ENCODE measurements at regions of chr6 and their contacts with region 1.

Region 1: DNA sequence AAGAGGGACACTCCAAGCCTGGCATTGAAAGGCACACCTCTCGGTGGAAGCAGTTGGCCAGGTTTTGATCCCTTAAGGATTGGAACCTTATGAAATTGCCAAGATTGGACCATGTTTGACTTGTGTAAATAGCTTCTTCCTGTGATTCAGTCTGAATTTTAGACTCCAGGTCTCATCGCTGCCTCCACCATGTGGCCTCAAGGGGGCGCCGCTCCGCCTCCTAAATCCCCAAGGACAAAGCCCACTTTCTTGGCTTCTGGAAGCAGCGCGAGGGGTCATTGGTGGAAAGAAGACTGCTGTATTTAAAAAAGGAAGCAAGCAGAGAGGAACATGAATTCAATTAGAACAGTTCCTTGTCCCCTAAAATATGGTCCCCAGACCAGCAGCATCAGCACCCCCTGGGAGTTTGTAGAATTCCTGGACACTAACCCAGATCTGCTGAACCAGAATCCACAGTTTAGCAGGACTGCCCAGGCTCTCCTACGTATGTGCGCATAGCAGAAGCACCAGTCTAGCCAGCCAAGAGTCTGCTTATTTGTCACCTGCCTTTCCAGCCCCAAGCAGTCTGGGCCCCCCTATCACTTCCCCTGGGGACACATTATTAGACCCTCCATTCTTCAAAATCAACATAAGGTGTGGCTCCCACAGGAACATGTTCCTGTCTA is 108.5 kb downstream of the LY86 start:
- DNase-seq: no peak
- H3K4me3 ChIP-seq: no peak overlapping the region
- CTCF ChIP-seq: peak; percentile 72

Region 2: DNA sequence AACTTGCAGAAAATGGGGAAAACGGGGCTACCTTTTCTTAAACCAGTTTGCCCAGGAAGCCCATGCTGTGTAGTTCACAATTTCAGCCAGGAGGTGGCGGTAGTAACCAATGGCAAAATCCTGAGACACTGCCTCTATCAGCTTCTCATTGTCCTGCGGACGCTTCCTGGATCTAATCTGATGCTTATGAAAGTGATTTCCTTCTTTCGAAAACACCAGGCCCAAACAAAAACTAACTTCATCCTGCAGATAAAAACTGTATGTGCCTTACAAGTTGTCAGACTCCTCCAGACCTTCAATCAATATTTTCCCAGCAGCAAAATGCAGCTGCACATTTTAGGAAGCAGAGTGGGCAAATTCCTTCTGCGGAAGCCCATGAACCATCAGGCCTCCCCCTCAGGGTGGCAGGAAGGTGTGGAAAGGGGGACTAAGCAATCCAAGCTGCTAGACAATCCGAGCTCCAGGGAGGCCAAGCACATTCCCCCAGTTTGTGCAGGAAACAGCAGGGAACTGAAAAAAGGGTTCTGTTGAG is 20.0 kb before region 1 on chr6:
- CTCF ChIA-PET with region 1: interaction called, 13 read pairs
- POLR2A ChIA-PET with region 1: no interaction called
- DNase-seq: no peak
- H3K4me3 ChIP-seq: no peak overlapping the region
- CTCF ChIP-seq: peak; percentile 87

Region 3: GRCh38 chr6:6712258-6712999 is 15.4 kb after region 1 on chr6:
- CTCF ChIA-PET with region 1: interaction called, 13 read pairs
- POLR2A ChIA-PET with region 1: interaction called, 4 read pairs
- DNase-seq: peak; percentile 50
- H3K4me3 ChIP-seq: no peak overlapping the region; the same call in 1 of the 2 replicates
- CTCF ChIP-seq: no peak

Region 4: GRCh38 chr6:6724539-6725467 is 27.8 kb after region 1 on chr6:
- CTCF ChIA-PET with region 1: interaction called, 16 read pairs
- POLR2A ChIA-PET with region 1: no interaction called
- DNase-seq: peak; percentile 26
- H3K4me3 ChIP-seq: peak overlapping the region; percentile 47
- CTCF ChIP-seq: peak; percentile 72

Measured in AG04449 (cell line).